ENCODE measurements at regions of chr22 and their contacts with region 1.

Region 1: GRCh38 chr22:22463855-22464540 is 44.5 kb downstream of the ZNF280B start:
- DNase-seq: peak; percentile 38 to 52
- ATAC-seq: peak; percentile 73 to 93; a peak in 5 of 6 replicates
- H3K4me3 ChIP-seq: peak overlapping the region; percentile 18; the same call in 1 of the 3 replicates
- H3K27ac ChIP-seq: no peak overlapping the region
- H3K4me1 ChIP-seq: no peaks in the 10 kb centered on the region
- CTCF ChIP-seq: peak; percentile 73
- EP300 ChIP-seq: no peak
- POLR2A ChIP-seq: no peak
- RAD21 ChIP-seq: peak; percentile 85 to 86

Region 2: DNA sequence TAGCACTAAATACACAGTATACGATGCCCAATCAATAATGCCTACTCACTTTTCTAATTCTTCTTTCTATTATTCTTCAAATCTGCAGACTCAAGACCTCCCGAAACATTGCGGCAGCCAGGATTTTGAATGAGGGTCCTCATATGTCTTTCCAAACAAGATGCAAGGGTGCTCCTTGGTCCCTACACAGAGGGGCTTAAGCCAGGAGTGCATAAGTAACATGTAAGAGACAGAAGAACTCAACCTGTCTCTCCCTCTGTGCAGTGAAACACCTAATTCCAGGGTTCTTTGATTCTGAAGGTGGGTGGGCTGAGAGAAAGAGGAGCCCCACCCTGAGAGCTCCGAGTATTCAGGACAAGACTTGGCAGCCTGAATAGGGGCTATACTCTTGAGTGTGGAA is 73.0 kb before region 1 on chr22:
- CTCF ChIA-PET with region 1: no interaction called
- POLR2A ChIA-PET with region 1: no interaction called
- DNase-seq: no peak
- ATAC-seq: no peak
- H3K4me3 ChIP-seq: no peak overlapping the region
- H3K27ac ChIP-seq: no peak overlapping the region
- H3K4me1 ChIP-seq: no peaks in the 10 kb centered on the region
- CTCF ChIP-seq: no peak
- EP300 ChIP-seq: no peak
- POLR2A ChIP-seq: no peak
- RAD21 ChIP-seq: no peak

Region 3: DNA sequence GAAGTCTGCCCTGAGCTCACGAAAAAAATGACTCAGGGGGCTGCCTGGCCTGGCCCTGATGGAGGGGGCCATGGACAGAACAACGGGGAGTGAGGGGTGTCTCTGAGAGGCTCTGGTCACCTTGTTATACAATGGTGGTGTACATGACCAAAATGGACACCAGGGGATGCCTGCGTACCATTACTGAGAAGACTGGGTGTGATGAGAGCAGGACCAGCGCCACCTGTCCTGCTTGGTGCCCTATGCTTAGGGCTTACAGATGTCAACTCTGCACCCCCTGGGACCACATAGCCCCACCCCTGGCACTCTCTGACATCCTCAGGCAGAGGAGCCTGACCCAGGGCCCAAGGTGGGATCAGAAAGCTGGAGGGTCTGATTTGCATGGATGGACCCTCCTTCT is 60.2 kb before region 1 on chr22:
- CTCF ChIA-PET with region 1: no interaction called
- POLR2A ChIA-PET with region 1: no interaction called
- DNase-seq: peak in 1 of 2 experiments; percentile 6
- ATAC-seq: peak; percentile 49 to 73; a peak in 4 of 6 replicates
- H3K4me3 ChIP-seq: no peak overlapping the region
- H3K27ac ChIP-seq: no peak overlapping the region
- H3K4me1 ChIP-seq: no peaks in the 10 kb centered on the region
- CTCF ChIP-seq: no peak
- EP300 ChIP-seq: no peak
- POLR2A ChIP-seq: no peak
- RAD21 ChIP-seq: no peak

Region 4: GRCh38 chr22:22450343-22450839 is 13.6 kb before region 1 on chr22:
- CTCF ChIA-PET with region 1: interaction called, 12 read pairs
- POLR2A ChIA-PET with region 1: no interaction called
- DNase-seq: no peak
- ATAC-seq: no peak
- H3K4me3 ChIP-seq: no peak overlapping the region
- H3K27ac ChIP-seq: no peak overlapping the region
- H3K4me1 ChIP-seq: no peaks in the 10 kb centered on the region
- CTCF ChIP-seq: no peak
- EP300 ChIP-seq: no peak
- POLR2A ChIP-seq: no peak
- RAD21 ChIP-seq: no peak

Region 5: DNA sequence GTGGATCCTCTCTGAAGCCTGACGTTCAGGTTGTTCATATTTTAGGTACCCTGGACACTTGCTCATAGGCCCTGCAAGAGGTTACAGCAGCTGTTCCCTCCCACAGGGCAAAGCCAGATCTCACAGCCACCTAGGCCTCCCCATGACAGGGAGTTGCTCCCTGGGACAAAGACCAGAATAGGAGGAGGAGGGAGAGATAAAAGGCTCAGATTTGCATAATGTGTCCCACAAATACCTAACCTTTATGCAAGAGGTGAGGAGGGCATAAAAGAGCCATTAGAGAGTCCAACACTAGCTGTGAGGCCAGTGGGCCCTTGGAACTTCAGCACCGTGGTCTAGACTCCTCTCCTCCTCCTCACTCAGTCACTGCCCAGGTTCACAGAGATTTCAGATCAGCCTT is 10.7 kb after region 1 on chr22:
- CTCF ChIA-PET with region 1: interaction called, 19 read pairs
- POLR2A ChIA-PET with region 1: no interaction called
- DNase-seq: no peak
- ATAC-seq: no peak
- H3K4me3 ChIP-seq: no peak overlapping the region
- H3K27ac ChIP-seq: no peak overlapping the region
- H3K4me1 ChIP-seq: no peaks in the 10 kb centered on the region
- CTCF ChIP-seq: no peak
- EP300 ChIP-seq: no peak
- POLR2A ChIP-seq: no peak
- RAD21 ChIP-seq: no peak

Measured in A549 (cell line).